SK-N-SH (cell line): ENCODE measurements at regions of chr1 and their contacts with region 1.

Region 1: DNA sequence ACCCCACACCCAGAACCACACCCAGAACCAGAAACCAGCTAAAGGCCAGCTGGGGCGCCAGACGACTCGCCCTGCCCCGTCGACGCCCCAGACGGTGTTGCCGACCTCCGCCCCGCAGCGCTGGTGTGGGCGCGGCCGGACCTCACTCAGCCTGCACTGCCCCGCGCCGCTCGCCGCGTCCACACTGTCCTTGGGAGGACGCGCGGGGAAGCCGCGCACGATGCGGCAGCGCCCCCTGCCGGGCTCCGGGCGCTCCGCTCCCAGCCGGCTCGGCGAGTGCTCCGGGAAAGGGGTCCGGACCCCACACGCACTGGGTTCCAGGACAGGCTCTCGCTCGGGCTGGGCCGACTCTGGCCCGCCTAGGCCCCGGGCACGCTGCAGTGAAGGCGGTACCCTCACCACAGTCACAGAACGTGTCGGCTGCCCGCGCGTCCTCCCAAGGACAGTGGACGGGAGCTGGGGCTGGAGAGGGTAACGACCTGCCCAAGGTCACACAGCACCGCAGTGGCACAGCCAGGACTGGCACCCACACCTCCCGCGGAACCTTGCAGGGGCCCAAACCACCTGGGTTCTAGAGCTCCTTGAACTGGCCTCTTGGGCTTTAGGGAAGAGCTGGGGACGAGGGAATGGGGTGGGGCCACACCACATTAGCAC is 90.2 kb downstream of the DMRTA2 start:
- DNase-seq: peak; percentile 90
- H3K4me3 ChIP-seq: peak overlapping the region; percentile 23 to 25; a peak in 2 of 4 replicates
- H3K27ac ChIP-seq: peak overlapping the region in 1 of 2 experiments; percentile 78; a peak in 2 of 4 replicates
- H3K4me1 ChIP-seq: peaks cover 0 to 57% of the 10 kb centered on the region in 2 experiments; a peak in 2 of 4 replicates
- H3K27me3 ChIP-seq: no peaks in the 10 kb centered on the region
- CTCF ChIP-seq: peak; percentile 69
- EP300 ChIP-seq: no peak; a peak in 1 of 4 replicates
- RAD21 ChIP-seq: peak; percentile 92

Region 2: DNA sequence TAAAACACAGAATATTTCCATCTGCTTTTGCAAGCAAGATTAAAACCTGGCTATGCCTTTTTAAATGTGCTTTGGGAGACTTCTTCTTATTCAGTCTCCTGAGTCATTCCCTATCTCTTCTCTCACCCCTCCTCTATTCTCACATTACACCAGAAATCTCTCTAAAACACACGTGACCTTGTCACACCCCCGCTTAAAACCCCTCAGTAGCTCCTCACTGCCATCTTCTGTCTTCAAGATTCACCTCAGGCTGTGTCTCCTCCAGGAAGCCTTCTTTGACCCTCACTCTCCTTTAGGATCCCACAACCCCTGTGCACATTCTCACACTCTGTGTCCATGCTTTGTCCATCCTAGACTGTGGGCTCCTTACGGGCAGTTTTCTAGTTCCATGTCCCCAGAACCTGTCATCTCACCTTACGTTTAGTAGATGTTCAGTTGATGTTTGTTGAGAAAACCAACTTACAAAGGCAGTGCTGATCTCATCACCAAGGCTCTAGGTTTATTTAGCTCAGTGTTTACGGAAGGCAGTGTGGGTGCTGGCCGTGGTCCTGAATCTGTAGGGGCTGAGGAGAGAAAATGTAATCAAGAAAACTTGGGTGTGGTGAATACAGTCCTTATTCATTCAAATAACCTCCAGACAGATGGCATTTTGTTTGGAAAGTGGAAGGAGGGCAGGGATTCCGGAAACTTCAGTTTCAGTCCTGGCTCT is 53.3 kb before region 1 on chr1:
- CTCF ChIA-PET with region 1: interaction called, 100 read pairs
- POLR2A ChIA-PET with region 1: interaction called, 4 read pairs
- DNase-seq: no peak
- H3K4me3 ChIP-seq: no peak overlapping the region
- H3K27ac ChIP-seq: peak overlapping the region in 1 of 2 experiments; percentile 100; a peak in 2 of 4 replicates
- H3K4me1 ChIP-seq: peaks cover 0 to 51% of the 10 kb centered on the region in 2 experiments; a peak in 2 of 4 replicates
- H3K27me3 ChIP-seq: no peaks in the 10 kb centered on the region
- CTCF ChIP-seq: no peak
- EP300 ChIP-seq: no peak
- RAD21 ChIP-seq: no peak

Region 3: GRCh38 chr1:50308878-50309277 is 24.2 kb before region 1 on chr1:
- CTCF ChIA-PET with region 1: interaction called, 18 read pairs
- POLR2A ChIA-PET with region 1: no interaction called
- DNase-seq: peak; percentile 47
- H3K4me3 ChIP-seq: no peak overlapping the region
- H3K27ac ChIP-seq: peak overlapping the region in 1 of 2 experiments; percentile 96; a peak in 2 of 4 replicates
- H3K4me1 ChIP-seq: peaks cover 0 to 32% of the 10 kb centered on the region in 2 experiments; a peak in 2 of 4 replicates
- H3K27me3 ChIP-seq: no peaks in the 10 kb centered on the region
- CTCF ChIP-seq: no peak
- EP300 ChIP-seq: peak in 1 of 2 experiments; percentile 86; a peak in 2 of 4 replicates
- RAD21 ChIP-seq: no peak

Region 4: GRCh38 chr1:50343323-50343722 is 10.3 kb after region 1 on chr1:
- CTCF ChIA-PET with region 1: interaction called, 60 read pairs
- POLR2A ChIA-PET with region 1: no interaction called
- DNase-seq: no peak
- H3K4me3 ChIP-seq: no peak overlapping the region
- H3K27ac ChIP-seq: peak overlapping the region in 1 of 2 experiments; percentile 97; a peak in 2 of 4 replicates
- H3K4me1 ChIP-seq: peaks cover 0 to 49% of the 10 kb centered on the region in 2 experiments; a peak in 2 of 4 replicates
- H3K27me3 ChIP-seq: no peaks in the 10 kb centered on the region
- CTCF ChIP-seq: no peak
- EP300 ChIP-seq: no peak
- RAD21 ChIP-seq: no peak

Region 5: GRCh38 chr1:50348449-50349241 is 15.6 kb after region 1 on chr1:
- CTCF ChIA-PET with region 1: interaction called, 60 read pairs
- POLR2A ChIA-PET with region 1: no interaction called
- DNase-seq: peak; percentile 77
- H3K4me3 ChIP-seq: no peak overlapping the region
- H3K27ac ChIP-seq: peak overlapping the region in 1 of 2 experiments; percentile 48; a peak in 1 of 4 replicates
- H3K4me1 ChIP-seq: peaks cover 0 to 23% of the 10 kb centered on the region in 2 experiments; a peak in 2 of 4 replicates
- H3K27me3 ChIP-seq: no peaks in the 10 kb centered on the region
- CTCF ChIP-seq: peak; percentile 82
- EP300 ChIP-seq: peak in 1 of 2 experiments; percentile 30; a peak in 1 of 4 replicates
- RAD21 ChIP-seq: peak; percentile 99